ENCODE measurements at regions of chr13 and their contacts with region 1.

Region 1: GRCh38 chr13:42969558-42970172 is 22.4 kb downstream of the EPSTI1 start:
- DNase-seq: peak; percentile 64 to 85 (median 75)
- H3K4me3 ChIP-seq: no peak overlapping the region
- H3K4me3 Mint-ChIP-seq: peak overlapping the region in 1 of 7 donors; percentile 37
- H3K27ac ChIP-seq: no peak overlapping the region
- H3K27ac Mint-ChIP-seq: no peak overlapping the region
- H3K4me1 ChIP-seq: peaks cover 9% of the 10 kb centered on the region
- H3K4me1 Mint-ChIP-seq: peaks cover 13 to 23% (median 17%) of the 10 kb centered on the region in 3 donors
- H3K27me3 ChIP-seq: no peaks in the 10 kb centered on the region
- H3K27me3 Mint-ChIP-seq: no peaks in the 10 kb centered on the region

Region 2: DNA sequence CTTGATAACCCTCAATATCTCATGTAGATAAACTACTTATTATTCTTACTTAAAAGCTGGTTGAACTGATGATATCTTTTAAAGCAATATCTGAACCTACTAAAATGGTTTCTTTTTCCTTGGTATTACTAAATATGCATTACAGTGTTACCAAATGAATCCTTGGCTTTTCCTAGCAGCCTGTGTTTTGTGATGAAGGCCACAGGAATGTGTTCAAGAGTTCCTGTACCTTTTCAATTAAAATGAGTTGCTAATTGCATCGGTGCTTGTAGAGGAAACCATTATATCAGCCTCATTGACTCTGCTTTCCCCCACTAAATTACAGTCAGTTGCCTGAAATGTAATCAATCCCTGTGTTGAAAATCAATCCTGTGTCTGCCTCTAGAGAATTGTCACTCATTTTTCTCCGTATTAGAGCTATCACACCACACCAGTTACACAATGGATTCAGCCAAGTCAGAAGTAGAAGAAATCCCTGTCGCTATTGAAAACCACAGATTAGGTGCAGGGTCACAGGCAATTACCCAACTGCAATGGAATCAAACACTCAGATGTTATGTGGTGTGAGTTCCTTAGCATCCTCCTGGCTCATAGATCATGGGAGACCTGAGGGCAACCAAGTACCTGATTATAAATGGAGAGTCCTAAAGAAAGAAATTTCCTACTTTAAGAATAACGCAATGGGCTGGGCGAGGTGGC is 174.9 kb before region 1 on chr13:
- CTCF ChIA-PET with region 1: no interaction called
- POLR2A ChIA-PET with region 1: no interaction called
- DNase-seq: no peak
- H3K4me3 ChIP-seq: no peak overlapping the region
- H3K4me3 Mint-ChIP-seq: no peak overlapping the region
- H3K27ac ChIP-seq: no peak overlapping the region
- H3K27ac Mint-ChIP-seq: no peak overlapping the region
- H3K4me1 ChIP-seq: no peaks in the 10 kb centered on the region
- H3K4me1 Mint-ChIP-seq: no peaks in the 10 kb centered on the region
- H3K27me3 ChIP-seq: no peaks in the 10 kb centered on the region
- H3K27me3 Mint-ChIP-seq: peaks cover 3 to 16% of the 10 kb centered on the region in 2 donors

Region 3: DNA sequence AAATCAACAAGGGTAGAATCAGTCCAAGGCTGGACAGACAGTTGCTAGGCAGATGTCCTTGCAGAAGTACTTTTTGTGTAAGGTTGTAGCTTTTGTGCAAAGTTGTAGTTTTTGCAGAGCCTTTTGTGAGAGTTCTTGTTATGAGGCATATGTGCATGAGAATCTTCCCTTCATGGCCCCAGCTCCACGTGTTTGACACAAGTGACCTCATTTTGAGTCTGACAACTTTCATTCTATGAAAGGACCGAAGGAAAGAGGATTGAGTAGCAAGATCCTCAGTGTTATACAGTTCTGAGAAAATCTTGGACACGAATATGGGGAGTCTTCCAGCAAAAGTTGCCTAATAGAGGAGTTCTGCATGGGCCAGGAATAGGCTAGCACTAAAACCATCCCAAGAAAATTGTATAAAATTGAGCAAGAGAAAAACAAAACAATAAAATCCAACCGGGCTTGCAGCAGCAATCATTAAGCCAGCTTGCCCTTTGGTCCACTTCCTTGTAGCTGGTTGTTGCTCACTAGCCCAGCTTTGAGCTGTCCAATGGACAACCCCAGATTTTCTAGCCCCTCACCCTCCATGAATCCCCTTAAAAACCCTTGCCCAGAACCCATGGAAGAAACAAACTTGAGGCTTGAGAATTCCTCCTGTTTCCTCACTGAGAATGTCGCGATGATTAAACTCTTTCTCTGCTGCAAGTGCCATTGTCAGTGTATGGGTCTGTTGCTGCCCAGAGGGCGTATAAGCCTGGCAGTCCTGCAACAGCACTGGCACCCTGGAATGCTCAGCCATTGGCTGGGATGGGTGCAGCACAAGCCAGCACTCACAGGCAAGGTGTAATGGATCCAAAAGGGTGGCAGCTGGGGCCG is 15.9 kb after region 1 on chr13:
- CTCF ChIA-PET with region 1: interaction called, 40 read pairs
- POLR2A ChIA-PET with region 1: no interaction called
- DNase-seq: no peak
- H3K4me3 ChIP-seq: no peak overlapping the region
- H3K4me3 Mint-ChIP-seq: peak overlapping the region in 1 of 7 donors; percentile 21
- H3K27ac ChIP-seq: no peak overlapping the region
- H3K27ac Mint-ChIP-seq: no peak overlapping the region
- H3K4me1 ChIP-seq: peaks cover 10% of the 10 kb centered on the region
- H3K4me1 Mint-ChIP-seq: peaks cover 26 to 68% (median 66%) of the 10 kb centered on the region in 3 donors
- H3K27me3 ChIP-seq: no peaks in the 10 kb centered on the region
- H3K27me3 Mint-ChIP-seq: no peaks in the 10 kb centered on the region

Region 4: DNA sequence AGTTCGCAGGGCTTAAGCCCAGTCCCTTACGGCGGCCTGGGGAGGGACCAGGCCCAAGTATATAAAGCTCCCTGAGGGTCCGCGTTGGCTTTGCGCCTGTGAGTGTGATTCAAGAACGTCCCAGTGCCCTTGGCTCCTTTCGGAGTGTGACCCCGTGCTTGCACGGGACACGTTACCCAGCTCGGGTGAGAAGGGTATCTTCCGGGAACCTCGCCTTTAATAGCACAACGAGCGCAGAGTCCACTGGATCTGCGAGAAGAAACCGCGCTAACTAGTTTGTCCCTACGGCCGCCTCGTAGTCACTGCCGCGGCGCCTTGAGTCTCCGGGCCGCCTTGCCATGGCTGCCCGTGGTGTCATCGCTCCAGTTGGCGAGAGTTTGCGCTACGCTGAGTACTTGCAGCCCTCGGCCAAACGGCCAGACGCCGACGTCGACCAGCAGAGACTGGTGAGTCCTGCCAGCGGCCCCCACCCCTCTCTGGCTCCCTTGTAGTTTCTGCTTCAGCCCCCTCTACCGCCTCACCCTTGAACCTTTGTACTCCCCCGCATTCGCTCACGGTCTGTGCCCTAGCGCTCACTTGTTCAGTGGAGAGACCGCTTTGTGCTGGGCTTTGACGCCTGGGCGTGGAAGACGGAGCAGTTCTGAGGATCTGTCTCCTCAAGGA is 53.8 kb after region 1 on chr13 and contains the start of gene DNAJC15:
- CTCF ChIA-PET with region 1: interaction called, 11 read pairs
- POLR2A ChIA-PET with region 1: no interaction called
- DNase-seq: peak; percentile 63 to 88 (median 76)
- H3K4me3 ChIP-seq: peak within 1 kb of the TSS; percentile 77
- H3K4me3 Mint-ChIP-seq: peak within 1 kb of the TSS; percentile 97 to 100 (median 99)
- H3K27ac ChIP-seq: peak within 1 kb of the TSS; percentile 53
- H3K27ac Mint-ChIP-seq: peak within 1 kb of the TSS; percentile 92 to 99 (median 96)
- H3K4me1 ChIP-seq: peaks cover 18% of the 10 kb centered on the region
- H3K4me1 Mint-ChIP-seq: peaks cover 27 to 48% (median 43%) of the 10 kb centered on the region in 3 donors
- H3K27me3 ChIP-seq: no peaks in the 10 kb centered on the region
- H3K27me3 Mint-ChIP-seq: peaks cover 0 to 2% of the 10 kb centered on the region in 2 donors
- total RNA-seq, gene DNAJC15: 13.2 to 13.6 TPM

Region 5: DNA sequence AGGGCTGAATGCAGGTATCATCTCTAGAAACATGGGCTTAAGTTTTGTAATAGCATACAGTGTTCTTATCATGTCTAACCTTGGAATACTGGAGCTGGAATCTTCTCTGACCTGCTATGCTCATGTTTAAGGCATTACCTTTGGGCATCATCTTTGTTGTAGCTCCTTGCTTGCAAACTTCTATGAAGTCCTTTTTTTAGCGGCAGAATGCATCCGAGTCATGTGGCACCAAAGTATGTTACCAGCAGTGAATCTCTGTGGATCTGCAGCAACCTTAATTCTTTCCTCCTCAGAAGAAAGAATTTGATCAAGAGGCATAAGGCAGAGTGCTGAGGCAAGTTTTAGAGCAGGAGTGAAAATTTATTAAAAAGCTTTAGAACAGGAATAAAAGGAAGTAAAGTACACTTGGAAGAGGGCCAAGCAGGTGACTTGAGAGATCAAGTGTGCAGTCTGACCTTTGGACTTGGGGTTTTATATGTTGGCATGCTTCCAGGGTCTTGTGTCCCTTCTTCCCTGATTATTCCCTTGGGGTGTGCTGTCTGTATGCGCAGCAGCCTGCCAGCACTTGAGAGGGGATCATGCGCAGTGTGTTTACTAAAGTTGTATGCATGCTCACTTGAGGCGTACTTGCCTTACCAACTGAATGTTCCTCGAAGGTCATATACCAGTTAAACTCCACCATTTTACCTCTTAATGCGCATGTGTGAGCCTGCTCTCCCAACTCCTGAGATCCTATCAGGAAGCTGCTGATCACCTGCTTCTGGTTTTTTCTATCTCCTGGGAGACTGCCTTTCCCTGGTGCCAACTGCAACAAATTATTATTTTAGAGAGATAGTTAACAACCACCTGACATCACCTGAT is 1025.6 kb after region 1 on chr13:
- CTCF ChIA-PET with region 1: no interaction called
- POLR2A ChIA-PET with region 1: no interaction called
- DNase-seq: no peak
- H3K4me3 ChIP-seq: no peak overlapping the region
- H3K4me3 Mint-ChIP-seq: no peak overlapping the region
- H3K27ac ChIP-seq: no peak overlapping the region
- H3K27ac Mint-ChIP-seq: no peak overlapping the region
- H3K4me1 ChIP-seq: no peaks in the 10 kb centered on the region
- H3K4me1 Mint-ChIP-seq: no peaks in the 10 kb centered on the region
- H3K27me3 ChIP-seq: no peaks in the 10 kb centered on the region
- H3K27me3 Mint-ChIP-seq: peaks cover 8 to 30% of the 10 kb centered on the region in 2 donors

Measured in CD8-positive, alpha-beta memory T cell (primary cell).